ENCODE measurements at regions of chr19 and their contacts with region 1.

Region 1: DNA sequence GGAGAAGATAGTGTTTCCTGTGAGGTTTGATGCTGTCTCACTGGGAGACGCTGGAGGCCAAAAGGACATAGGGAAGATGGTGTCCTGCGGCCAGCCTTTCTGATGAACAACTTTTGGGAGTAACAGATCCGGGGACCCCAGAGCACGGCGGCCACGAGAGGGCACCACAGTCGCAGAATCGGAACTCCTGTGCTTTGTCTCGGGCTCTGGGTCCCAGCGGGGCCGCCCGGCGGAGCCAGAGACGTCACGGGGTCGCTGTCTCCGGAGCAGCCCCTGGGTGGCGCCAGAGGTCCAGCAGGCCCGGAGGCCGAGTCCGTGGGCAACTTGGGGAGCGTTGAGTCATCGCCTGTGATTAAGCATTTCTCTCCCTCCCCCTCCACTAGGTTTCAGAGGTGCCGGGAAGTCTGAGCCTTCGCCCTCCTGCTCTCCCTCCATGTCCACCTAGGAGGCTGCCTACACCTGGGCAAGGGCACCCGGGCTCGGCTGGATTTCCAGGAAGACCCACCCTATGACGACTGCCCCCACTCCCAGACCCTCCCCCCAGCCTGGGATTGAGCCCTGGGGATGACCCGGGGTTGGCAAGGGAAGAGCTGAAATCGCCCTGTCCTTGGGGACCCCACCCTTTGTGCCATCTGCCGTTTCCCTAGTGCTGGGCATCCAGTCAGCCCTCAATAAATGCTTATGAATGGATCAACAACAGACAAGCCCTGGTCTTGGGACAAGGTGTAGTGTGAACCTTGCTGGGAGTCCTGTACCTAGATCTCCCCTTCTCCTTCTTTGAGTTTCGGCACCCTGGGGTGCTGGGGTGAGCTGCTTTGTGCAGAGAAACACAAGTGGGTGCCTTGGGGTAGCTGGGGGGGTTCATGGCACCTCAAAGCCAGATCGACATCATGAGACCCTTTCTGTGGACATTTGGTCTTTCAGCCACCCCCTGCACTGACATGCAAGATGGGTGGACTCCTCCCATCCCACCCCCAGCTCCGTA is 3.4 kb downstream of the NANOS3 start:
- DNase-seq: peak; percentile 97 to 99 (median 99)
- H3K4me3 ChIP-seq: peak overlapping the region in 1 of 4 donors; percentile 34
- H3K27ac ChIP-seq: peak overlapping the region in 3 of 5 donors; percentile 60 to 72 (median 63)
- H3K4me1 ChIP-seq: peaks cover 5 to 18% of the 10 kb centered on the region in 2 donors
- H3K27me3 ChIP-seq: no peaks in the 10 kb centered on the region
- CTCF ChIP-seq: peak; percentile 94 to 100 (median 100)
- POLR2A ChIP-seq: no peak

Region 2: DNA sequence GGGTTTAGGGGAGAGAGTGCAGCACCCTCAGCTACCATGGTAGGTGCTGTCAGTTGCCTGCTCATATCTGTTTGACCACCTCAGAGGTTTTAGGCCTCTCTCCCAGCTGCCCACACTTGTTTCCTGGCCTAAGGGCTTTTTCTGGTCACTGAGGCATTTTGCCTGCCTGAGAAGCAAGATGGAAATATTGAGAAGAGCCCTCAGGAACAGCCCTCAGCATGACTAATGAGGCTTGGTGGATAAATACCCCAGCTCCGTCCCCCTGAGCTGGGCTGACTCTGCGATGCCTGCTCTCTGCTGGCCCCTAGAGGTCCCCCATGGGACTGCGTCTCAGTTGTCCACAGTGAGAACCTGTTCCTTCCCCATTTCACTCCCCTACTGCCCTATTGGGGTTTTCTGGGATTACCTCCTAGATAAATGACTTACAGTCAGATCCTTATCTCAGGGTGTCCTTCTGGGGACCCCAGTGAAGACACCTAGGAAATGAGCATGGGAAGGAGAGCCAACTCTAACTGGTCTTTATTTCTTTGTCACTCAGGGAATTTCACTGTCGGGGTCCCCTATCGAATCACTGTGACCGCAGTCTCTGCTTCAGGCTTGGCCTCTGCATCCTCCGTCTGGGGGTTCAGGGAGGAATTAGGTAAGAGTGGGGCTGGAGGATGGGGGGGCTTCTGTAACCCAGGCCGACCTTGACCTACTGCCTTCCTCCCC is 168.2 kb after region 1 on chr19:
- intact Hi-C with region 1: loop called (anchors 10 kb)
- DNase-seq: peak; percentile 42 to 70 (median 52)
- H3K4me3 ChIP-seq: no peak overlapping the region
- H3K27ac ChIP-seq: no peak overlapping the region
- H3K4me1 ChIP-seq: no peaks in the 10 kb centered on the region
- H3K27me3 ChIP-seq: no peaks in the 10 kb centered on the region
- CTCF ChIP-seq: peak; percentile 43 to 79 (median 64)
- POLR2A ChIP-seq: no peak

Region 3: DNA sequence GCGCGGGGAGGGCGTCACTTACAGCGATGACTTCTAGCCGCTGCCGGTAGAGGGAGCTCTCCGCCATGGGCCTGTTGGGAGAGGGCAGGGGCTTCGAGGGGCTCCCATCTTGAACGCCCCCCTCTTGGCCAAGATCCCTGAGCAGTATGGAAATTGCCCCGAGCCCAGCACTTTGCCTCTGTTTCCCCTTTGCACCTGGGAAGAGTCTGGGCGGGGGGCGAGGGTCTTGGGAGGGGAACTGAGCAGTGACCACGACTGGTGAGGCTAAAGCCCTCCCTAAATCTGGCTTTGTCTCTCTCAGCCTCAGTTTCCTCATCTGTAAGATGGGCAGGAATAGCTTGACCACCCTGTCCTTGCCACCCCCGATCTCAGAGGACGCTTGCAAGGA is 178.7 kb after region 1 on chr19:
- intact Hi-C with region 1: loop called in 1 of 2 experiments (anchors 10 kb)
- DNase-seq: no peak
- H3K4me3 ChIP-seq: no peak overlapping the region
- H3K27ac ChIP-seq: no peak overlapping the region
- H3K4me1 ChIP-seq: peaks cover 0 to 4% of the 10 kb centered on the region in 2 donors
- H3K27me3 ChIP-seq: peaks cover 15% of the 10 kb centered on the region
- CTCF ChIP-seq: peak; percentile 18 to 46 (median 38)
- POLR2A ChIP-seq: no peak

Region 4: GRCh38 chr19:14073261-14073924 is 193.0 kb after region 1 on chr19:
- intact Hi-C with region 1: loop called in 1 of 2 experiments (anchors 5 kb)
- DNase-seq: peak; percentile 74 to 83 (median 79)
- H3K4me3 ChIP-seq: peak overlapping the region; percentile 32 to 71 (median 50)
- H3K27ac ChIP-seq: peak overlapping the region; percentile 60 to 90 (median 79)
- H3K4me1 ChIP-seq: peaks cover 20 to 33% of the 10 kb centered on the region in 2 donors
- H3K27me3 ChIP-seq: no peaks in the 10 kb centered on the region
- CTCF ChIP-seq: peak in 3 of 6 experiments; percentile 48 to 91 (median 85)
- POLR2A ChIP-seq: peak; percentile 56 to 78

Region 5: GRCh38 chr19:14347999-14348889 is 467.9 kb after region 1 on chr19:
- intact Hi-C with region 1: loop called in 1 of 2 experiments (anchors 5 kb)
- DNase-seq: peak; percentile 36 to 69 (median 56)
- H3K4me3 ChIP-seq: peak overlapping the region in 1 of 4 donors; percentile 38
- H3K27ac ChIP-seq: no peak overlapping the region
- H3K4me1 ChIP-seq: peaks cover 0 to 7% of the 10 kb centered on the region in 2 donors
- H3K27me3 ChIP-seq: no peaks in the 10 kb centered on the region
- CTCF ChIP-seq: peak; percentile 74 to 96 (median 90)
- POLR2A ChIP-seq: no peak

Measured in adrenal gland (tissue), 19 donors.